Ovary (tissue), 10 donors: ENCODE measurements at regions of chr19 and their contacts with region 1.

Region 1: GRCh38 chr19:40662921-40663694 is 27.3 kb downstream of the NUMBL start:
- DNase-seq: peak; percentile 93 to 97 (median 96)
- H3K4me3 ChIP-seq: peak overlapping the region; percentile 66
- H3K27ac ChIP-seq: peak overlapping the region; percentile 65 to 82
- H3K4me1 ChIP-seq: peaks cover 8% of the 10 kb centered on the region
- H3K27me3 ChIP-seq: no peaks in the 10 kb centered on the region
- CTCF ChIP-seq: peak; percentile 97 to 100 (median 100)
- EP300 ChIP-seq: peak; percentile 74
- POLR2A ChIP-seq: peak; percentile 46

Region 2: GRCh38 chr19:40553885-40554857 is 108.9 kb before region 1 on chr19:
- intact Hi-C with region 1: no loop called
- DNase-seq: no peak
- H3K4me3 ChIP-seq: no peak overlapping the region
- H3K27ac ChIP-seq: no peak overlapping the region
- H3K4me1 ChIP-seq: no peaks in the 10 kb centered on the region
- H3K27me3 ChIP-seq: no peaks in the 10 kb centered on the region
- CTCF ChIP-seq: no peak
- EP300 ChIP-seq: no peak
- POLR2A ChIP-seq: no peak

Region 3: GRCh38 chr19:40798223-40798996 is 135.3 kb after region 1 on chr19:
- intact Hi-C with region 1: loop called in 1 of 4 experiments (anchors 5 kb)
- DNase-seq: peak; percentile 100
- H3K4me3 ChIP-seq: peak overlapping the region; percentile 79
- H3K27ac ChIP-seq: peak overlapping the region; percentile 42 to 83
- H3K4me1 ChIP-seq: peaks cover 27% of the 10 kb centered on the region
- H3K27me3 ChIP-seq: no peaks in the 10 kb centered on the region
- CTCF ChIP-seq: peak; percentile 37 to 78 (median 75)
- EP300 ChIP-seq: peak; percentile 77
- POLR2A ChIP-seq: peak; percentile 71

Region 4: DNA sequence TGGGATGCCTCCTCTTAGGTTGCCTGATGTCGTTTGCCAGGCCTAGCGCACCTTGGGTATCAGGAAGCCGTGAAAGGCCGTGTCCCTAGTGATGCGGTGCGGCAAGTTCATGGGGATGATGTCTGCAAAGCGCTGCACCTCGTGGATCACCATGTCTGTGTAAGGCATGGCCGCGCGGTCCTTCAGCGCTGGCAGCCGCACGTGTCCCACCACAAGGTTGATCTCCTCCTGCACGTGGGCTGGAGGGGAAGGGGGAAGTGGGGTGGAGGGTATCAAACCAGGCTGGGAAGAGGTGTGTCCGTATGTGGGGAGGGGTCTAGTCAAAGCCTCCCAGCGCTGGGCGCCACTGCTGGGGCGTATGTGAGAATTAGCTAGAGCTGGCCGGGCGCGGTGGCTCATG is 159.1 kb after region 1 on chr19:
- intact Hi-C with region 1: loop called in 2 of 4 experiments (anchors 5 kb)
- DNase-seq: peak in 1 of 5 donors; percentile 15
- H3K4me3 ChIP-seq: no peak overlapping the region
- H3K27ac ChIP-seq: peak overlapping the region in 1 of 2 donors; percentile 46
- H3K4me1 ChIP-seq: peaks cover 23% of the 10 kb centered on the region
- H3K27me3 ChIP-seq: no peaks in the 10 kb centered on the region
- CTCF ChIP-seq: no peak
- EP300 ChIP-seq: no peak
- POLR2A ChIP-seq: no peak

Region 5: GRCh38 chr19:41134616-41135015 is 471.5 kb after region 1 on chr19:
- intact Hi-C with region 1: loop called in 1 of 4 experiments (anchors 5 kb)
- DNase-seq: no peak
- H3K4me3 ChIP-seq: no peak overlapping the region
- H3K27ac ChIP-seq: no peak overlapping the region
- H3K4me1 ChIP-seq: no peaks in the 10 kb centered on the region
- H3K27me3 ChIP-seq: no peaks in the 10 kb centered on the region
- CTCF ChIP-seq: no peak
- EP300 ChIP-seq: no peak
- POLR2A ChIP-seq: no peak

Region 6: DNA sequence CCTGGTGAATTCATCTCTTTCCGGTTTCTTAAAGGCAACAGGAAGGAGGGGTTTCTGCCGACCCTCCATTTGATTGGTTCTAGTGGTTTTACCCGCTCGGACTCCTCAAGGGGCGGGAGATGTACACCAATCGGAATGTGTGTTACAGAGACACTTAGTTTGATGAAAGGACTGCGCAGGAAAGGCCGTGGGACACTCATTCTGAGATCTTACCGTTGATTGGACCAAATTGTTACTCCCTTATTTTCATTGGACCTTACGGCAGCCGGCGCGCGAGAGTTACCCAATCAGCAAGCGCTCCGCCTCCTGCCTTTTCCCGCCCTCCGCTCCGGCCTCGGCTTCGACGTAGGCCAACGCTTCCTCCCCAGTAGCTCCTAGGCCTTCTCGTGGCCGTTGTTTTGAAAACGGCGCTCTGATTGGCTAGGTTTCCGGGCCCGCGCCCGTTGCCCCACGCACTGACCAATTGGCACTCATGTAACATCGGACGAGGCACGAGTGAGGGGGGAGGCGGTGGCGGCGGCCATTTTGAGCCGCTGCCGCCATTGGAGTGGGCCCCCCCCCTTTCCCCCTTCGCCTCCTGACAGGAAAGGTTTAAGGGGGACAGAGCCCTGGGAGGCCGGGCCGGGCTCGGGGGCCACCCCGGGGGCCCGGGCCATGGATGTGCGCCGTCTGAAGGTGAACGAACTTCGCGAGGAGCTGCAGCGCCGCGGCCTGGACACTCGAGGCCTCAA is 600.9 kb after region 1 on chr19 and contains the start of gene HNRNPUL1:
- intact Hi-C with region 1: loop called in 1 of 4 experiments (anchors 5 kb)
- DNase-seq: peak; percentile 99 to 100 (median 99)
- H3K4me3 ChIP-seq: peak within 1 kb of the TSS; percentile 100
- H3K27ac ChIP-seq: peak within 1 kb of the TSS; percentile 95 to 96
- H3K4me1 ChIP-seq: peaks cover 3% of the 10 kb centered on the region
- H3K27me3 ChIP-seq: no peaks in the 10 kb centered on the region
- CTCF ChIP-seq: peak in 1 of 3 donors; percentile 56
- EP300 ChIP-seq: peak; percentile 3
- POLR2A ChIP-seq: peak; percentile 48
- total RNA-seq, gene HNRNPUL1: 102 to 259 (median 223) TPM

Region 7: DNA sequence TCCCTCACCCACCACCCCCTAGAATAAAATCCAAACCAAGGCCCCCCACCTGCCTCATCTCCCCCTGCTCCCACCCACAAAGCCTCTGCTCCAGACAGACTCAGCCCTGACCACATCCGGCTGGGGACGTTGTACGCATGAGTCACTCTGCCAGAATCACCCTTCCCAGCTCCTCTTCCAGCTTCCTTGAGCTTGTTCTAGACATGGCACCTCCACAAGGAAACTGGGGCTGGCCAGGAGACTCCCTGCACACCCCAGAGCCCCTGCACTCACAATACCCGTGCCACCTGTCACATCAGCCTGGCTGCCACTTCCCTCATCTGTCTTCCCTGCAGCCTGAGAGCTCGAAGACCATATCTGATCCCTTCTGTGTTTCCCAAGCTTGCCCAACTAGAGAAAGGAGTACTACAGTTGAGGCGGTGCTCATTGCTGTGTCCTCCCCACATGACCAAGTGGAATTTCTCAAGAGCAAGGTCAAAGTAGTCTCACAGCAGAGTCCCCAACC is 1544.7 kb after region 1 on chr19:
- intact Hi-C with region 1: no loop called
- DNase-seq: no peak
- H3K4me3 ChIP-seq: no peak overlapping the region
- H3K27ac ChIP-seq: no peak overlapping the region
- H3K4me1 ChIP-seq: no peaks in the 10 kb centered on the region
- H3K27me3 ChIP-seq: no peaks in the 10 kb centered on the region
- CTCF ChIP-seq: no peak
- EP300 ChIP-seq: no peak
- POLR2A ChIP-seq: no peak